ENCODE measurements at regions of chr1 and their contacts with region 1.

Region 1: DNA sequence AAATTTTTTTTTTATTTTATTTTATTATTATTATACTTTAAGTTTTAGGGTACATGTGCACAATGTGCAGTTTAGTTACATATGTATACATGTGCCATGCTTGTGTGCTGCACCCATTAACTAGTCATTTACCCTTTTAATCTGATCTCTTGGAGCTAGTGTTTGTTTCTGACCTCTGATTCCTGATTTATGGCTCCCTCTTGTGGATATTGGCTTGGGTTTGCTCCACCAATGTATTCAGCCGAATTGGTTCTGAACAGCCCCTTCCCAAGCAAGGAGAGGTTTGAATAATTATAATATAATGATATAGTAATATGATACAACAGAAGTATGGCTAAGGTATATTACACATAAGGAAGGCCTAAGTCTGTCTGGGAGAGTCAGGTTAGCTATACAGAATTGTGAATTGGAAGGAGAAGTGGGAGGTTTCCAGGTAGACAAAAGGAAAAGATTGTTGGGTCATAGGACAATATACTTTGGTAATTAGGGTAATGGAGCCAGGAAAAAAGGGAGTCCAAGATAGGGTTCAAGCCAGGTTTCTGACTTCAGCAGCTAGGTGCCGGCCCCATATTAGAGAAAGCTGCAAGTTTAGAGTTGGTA is 53.1 kb upstream of the HMCN1 start:
- DNase-seq: peak; percentile 56
- H3K4me3 Mint-ChIP-seq: no peak overlapping the region
- H3K27ac Mint-ChIP-seq: no peak overlapping the region
- H3K4me1 Mint-ChIP-seq: no peaks in the 10 kb centered on the region
- H3K27me3 Mint-ChIP-seq: no peaks in the 10 kb centered on the region
- CTCF ChIP-seq: peak; percentile 59

Region 2: DNA sequence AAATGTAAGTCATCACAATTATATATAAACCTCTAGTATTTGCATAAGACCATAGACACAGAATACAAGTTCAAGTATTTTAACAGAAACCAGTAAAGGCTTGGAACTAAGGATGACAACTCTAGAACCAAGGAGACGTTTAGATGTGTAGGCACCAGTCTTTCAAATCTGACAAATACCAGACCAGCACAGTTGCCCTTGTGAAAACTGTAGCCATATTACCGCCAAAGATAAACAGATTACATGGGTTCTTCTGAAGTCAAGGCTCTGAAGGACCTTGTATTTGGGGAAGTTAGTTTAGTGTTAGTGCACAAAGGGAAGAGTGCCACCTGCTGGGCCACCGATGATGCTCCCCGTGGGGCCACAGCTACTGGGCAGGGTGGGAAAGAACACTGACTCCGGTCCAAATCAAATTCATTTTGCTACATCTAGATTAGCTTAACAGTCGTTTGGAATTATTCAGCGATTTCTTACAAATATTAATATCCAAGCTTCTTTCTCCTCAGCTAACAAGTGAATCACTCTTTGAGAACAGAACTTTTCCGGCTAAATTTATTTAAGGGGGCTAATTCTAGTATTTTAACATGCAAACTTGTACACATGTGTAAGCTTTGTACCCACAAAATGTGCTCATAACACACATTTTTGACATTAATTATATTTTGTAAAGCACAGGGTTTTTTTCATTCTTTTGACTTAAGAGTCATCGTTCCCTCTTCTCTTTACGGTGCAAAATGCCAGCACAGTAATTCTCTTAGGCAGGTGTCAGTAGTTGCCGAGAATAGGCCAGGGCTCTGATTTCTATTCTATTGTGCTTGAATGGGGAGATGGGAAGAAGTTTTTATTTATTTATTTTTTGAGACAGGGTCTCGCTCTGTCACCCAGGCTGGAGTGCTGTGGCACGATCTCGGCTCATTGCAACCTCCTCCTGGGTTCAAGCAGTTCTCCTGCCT is 698.9 kb before region 1 on chr1:
- CTCF ChIA-PET with region 1: no interaction called
- intact Hi-C with region 1: loop called (anchors 10 kb)
- DNase-seq: peak; percentile 83
- H3K4me3 Mint-ChIP-seq: no peak overlapping the region
- H3K27ac Mint-ChIP-seq: no peak overlapping the region
- H3K4me1 Mint-ChIP-seq: no peaks in the 10 kb centered on the region
- H3K27me3 Mint-ChIP-seq: peaks cover 23% of the 10 kb centered on the region
- CTCF ChIP-seq: peak; percentile 85

Region 3: DNA sequence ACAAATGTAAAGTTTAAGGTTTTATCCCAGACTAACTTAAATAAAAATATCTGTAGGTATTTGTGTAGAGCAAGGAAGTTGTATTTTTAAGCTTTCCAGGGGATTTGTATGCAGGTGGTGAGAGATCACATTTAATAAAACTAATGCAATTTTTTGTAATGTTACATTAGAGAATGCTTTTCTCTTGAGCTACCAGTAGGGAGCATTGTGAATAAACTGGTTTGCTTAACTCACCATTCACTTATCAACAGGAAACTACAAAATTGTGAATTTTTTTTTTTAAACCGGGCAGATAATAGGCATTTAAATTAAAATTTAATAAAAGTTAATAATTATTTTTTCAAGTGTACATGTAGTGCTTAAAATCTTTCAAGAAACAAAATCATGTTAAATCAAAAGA is 442.7 kb before region 1 on chr1:
- CTCF ChIA-PET with region 1: interaction called, 12 read pairs
- intact Hi-C with region 1: no loop called
- DNase-seq: no peak
- H3K4me3 Mint-ChIP-seq: no peak overlapping the region
- H3K27ac Mint-ChIP-seq: no peak overlapping the region
- H3K4me1 Mint-ChIP-seq: no peaks in the 10 kb centered on the region
- H3K27me3 Mint-ChIP-seq: no peaks in the 10 kb centered on the region
- CTCF ChIP-seq: peak; percentile 14

Region 4: GRCh38 chr1:185559151-185559550 is 122.0 kb before region 1 on chr1:
- CTCF ChIA-PET with region 1: no interaction called
- intact Hi-C with region 1: no loop called
- DNase-seq: no peak
- H3K4me3 Mint-ChIP-seq: no peak overlapping the region
- H3K27ac Mint-ChIP-seq: no peak overlapping the region
- H3K4me1 Mint-ChIP-seq: peaks cover 40% of the 10 kb centered on the region
- H3K27me3 Mint-ChIP-seq: no peaks in the 10 kb centered on the region
- CTCF ChIP-seq: no peak

Region 5: GRCh38 chr1:185652348-185652747 is 28.8 kb before region 1 on chr1:
- CTCF ChIA-PET with region 1: interaction called, 11 read pairs
- intact Hi-C with region 1: no loop called
- DNase-seq: no peak
- H3K4me3 Mint-ChIP-seq: no peak overlapping the region
- H3K27ac Mint-ChIP-seq: no peak overlapping the region
- H3K4me1 Mint-ChIP-seq: peaks cover 21% of the 10 kb centered on the region
- H3K27me3 Mint-ChIP-seq: no peaks in the 10 kb centered on the region
- CTCF ChIP-seq: no peak

Measured in Calu3 (cell line).